ENCODE measurements at regions of chr19 and their contacts with region 1.

Region 1: GRCh38 chr19:14529254-14530004 is at the start of gene TECR:
- H3K4me3 Mint-ChIP-seq: peak within 1 kb of the TSS; percentile 100
- H3K27ac Mint-ChIP-seq: peak within 1 kb of the TSS; percentile 94
- H3K4me1 Mint-ChIP-seq: peaks cover 35% of the 10 kb centered on the region
- H3K27me3 Mint-ChIP-seq: no peaks in the 10 kb centered on the region

Region 2: GRCh38 chr19:14505488-14506432 is 23.7 kb before region 1 on chr19:
- intact Hi-C with region 1: no loop called
- H3K4me3 Mint-ChIP-seq: no peak overlapping the region
- H3K27ac Mint-ChIP-seq: no peak overlapping the region
- H3K4me1 Mint-ChIP-seq: peaks cover 41% of the 10 kb centered on the region
- H3K27me3 Mint-ChIP-seq: peaks cover 7% of the 10 kb centered on the region

Region 3: DNA sequence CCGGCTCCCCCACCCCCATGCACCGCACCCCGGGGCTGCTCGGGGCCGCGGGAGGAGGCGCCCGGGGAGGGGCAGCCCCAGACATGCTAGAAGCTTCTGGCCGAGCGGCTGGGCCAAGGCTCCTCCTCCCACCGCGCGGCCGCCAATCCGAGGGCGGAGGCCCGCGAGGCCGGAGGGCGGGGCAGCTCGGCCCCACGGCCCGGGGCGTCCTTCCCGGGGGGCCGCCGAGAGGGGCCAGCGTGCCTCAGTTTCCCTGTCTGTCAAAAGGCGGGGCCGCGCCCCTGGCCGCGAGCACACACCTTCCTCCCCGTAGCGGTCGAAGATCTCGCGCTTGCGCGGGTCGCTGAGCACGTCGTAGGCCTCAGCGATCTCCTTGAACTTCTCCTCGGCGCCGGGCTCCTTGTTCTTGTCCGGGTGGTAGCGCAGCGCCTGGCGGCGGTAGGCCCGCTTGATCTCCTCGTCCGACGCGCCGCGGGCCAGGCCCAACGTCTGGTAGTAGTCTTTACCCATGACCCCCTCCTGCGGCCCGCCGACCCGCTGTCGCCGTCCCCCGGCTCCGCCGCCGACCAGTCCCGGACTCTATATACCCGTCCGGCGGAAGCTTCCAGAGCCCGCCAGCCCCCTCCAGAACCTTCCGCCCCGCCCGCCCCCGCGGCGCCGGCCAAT is 11.5 kb before region 1 on chr19 and contains the start of gene DNAJB1:
- intact Hi-C with region 1: loop called (anchors 1 kb)
- H3K4me3 Mint-ChIP-seq: peak within 1 kb of the TSS; percentile 89
- H3K27ac Mint-ChIP-seq: peak within 1 kb of the TSS; percentile 97
- H3K4me1 Mint-ChIP-seq: peaks cover 59% of the 10 kb centered on the region
- H3K27me3 Mint-ChIP-seq: no peaks in the 10 kb centered on the region